Endothelial cell of umbilical vein (primary cell): ENCODE measurements at regions of chr22 and their contacts with region 1.

Region 1: DNA sequence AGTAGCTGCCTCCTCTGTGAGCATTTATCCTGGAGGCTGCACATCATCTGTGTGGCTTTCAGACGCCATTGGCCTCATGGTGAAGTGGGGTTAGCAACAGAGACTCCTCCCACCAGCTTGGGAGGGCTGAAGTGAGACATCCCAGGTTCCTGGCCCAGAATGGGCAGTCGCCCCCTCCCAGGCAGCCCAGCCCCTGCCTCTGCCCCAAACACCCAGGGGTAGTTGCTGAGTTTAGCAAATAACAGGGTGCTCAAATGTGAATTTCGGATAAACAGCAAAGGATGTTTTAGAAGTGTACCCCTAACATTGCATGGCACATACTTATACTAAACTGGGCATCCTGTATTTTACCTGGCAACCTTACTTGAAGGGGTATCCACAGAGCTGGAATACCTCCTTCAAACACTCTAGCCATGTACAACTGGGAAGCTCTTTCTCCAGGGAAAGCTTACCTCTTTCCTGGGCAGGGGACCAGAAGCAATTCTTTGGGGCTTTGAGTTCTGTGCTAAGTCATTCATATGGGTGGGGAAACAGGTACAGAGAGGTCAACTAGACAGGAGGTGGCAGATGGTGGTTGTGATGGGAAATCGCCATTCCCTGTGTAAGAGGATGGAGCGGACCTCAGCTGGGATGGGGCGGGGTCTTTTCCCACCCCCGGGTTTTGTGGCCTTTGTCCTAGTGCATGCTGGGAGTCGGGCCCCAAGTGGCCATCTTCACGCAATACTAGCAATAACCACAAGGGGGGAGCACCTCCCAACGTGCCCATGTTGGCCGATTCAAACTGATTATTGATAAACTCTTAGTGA is 19.3 kb downstream of the MTFP1 start:
- DNase-seq: peak; percentile 76
- H3K4me3 ChIP-seq: no peak overlapping the region
- H3K27ac ChIP-seq: no peak overlapping the region
- H3K4me1 ChIP-seq: no peaks in the 10 kb centered on the region
- H3K27me3 ChIP-seq: no peaks in the 10 kb centered on the region
- CTCF ChIP-seq: peak; percentile 77 to 83
- POLR2A ChIP-seq: peak; percentile 21

Region 2: GRCh38 chr22:30305519-30305905 is 139.3 kb before region 1 on chr22:
- CTCF ChIA-PET with region 1: no interaction called
- POLR2A ChIA-PET with region 1: no interaction called
- dilution Hi-C with region 1: no loop called
- intact Hi-C with region 1: no loop called
- DNase-seq: peak; percentile 55
- H3K4me3 ChIP-seq: no peak overlapping the region
- H3K27ac ChIP-seq: peak overlapping the region; percentile 41
- H3K4me1 ChIP-seq: peaks cover 36% of the 10 kb centered on the region
- H3K27me3 ChIP-seq: no peaks in the 10 kb centered on the region
- CTCF ChIP-seq: no peak
- POLR2A ChIP-seq: peak; percentile 41

Region 3: DNA sequence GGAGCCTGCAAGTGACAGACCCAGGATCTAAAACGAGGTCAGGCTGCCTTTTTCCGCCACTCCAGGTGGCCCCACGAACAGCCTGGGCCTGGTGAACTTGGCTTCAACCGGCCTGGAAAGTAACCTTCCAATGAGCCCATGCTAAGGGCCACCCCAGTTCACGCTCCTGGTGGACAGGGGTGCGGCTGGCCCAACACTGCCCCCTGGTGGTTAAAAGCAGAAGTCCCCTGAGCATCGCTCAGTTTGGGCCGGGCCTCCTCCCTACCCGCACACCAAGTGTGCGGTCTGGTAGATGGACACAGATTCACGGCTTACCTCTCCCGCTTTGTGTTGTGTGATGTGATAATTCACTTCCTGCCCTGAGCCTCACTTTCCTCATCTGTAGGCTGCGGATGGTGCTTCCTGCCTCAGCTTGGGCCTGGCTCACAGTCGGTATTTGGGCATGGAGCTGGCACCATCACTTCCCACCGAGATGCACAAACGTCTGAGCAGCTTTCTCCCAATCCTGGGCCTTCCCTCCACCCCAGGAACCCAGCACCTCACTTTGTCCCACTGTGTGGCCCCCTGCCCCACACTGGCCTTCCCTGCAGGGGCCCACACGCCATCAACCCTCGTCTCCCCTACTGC is 40.6 kb after region 1 on chr22:
- CTCF ChIA-PET with region 1: interaction called, 40 read pairs
- POLR2A ChIA-PET with region 1: no interaction called
- dilution Hi-C with region 1: no loop called
- intact Hi-C with region 1: loop called (anchors 1 kb)
- DNase-seq: peak; percentile 59
- H3K4me3 ChIP-seq: no peak overlapping the region
- H3K27ac ChIP-seq: no peak overlapping the region
- H3K4me1 ChIP-seq: no peaks in the 10 kb centered on the region
- H3K27me3 ChIP-seq: no peaks in the 10 kb centered on the region
- CTCF ChIP-seq: peak; percentile 86 to 93
- POLR2A ChIP-seq: no peak

Region 4: DNA sequence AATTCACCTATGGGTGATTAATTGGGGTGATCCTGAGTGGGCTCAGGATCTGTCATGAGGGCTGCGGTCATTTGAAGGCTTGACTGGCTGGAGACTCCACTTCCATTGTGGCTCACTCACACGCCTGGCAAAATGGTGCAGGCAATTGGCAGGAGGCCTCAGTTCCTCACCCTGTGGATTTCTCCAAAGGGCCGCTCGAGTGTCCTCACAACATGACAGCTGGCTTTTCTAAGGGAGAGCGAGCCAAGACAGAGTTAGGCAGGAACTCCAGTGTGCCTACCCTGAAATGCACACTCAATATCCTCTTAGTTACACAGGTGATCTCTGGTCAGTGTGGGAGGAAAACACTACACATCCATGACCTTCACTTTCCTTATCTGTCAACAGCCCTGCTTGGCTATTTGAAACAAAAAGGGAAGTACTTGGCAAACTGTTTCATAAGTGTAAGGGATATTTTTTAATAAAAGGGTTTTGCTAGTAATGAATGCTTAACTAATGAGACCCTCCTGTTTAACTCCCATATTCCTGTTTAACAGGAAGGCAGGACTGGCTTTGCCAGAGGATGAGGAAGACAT is 275.5 kb after region 1 on chr22:
- CTCF ChIA-PET with region 1: no interaction called
- POLR2A ChIA-PET with region 1: no interaction called
- dilution Hi-C with region 1: no loop called
- intact Hi-C with region 1: no loop called
- DNase-seq: peak; percentile 33
- H3K4me3 ChIP-seq: no peak overlapping the region
- H3K27ac ChIP-seq: no peak overlapping the region
- H3K4me1 ChIP-seq: peaks cover 13% of the 10 kb centered on the region
- H3K27me3 ChIP-seq: no peaks in the 10 kb centered on the region
- CTCF ChIP-seq: no peak
- POLR2A ChIP-seq: no peak